ENCODE measurements at regions of chr1 and their contacts with region 1.

Region 1: DNA sequence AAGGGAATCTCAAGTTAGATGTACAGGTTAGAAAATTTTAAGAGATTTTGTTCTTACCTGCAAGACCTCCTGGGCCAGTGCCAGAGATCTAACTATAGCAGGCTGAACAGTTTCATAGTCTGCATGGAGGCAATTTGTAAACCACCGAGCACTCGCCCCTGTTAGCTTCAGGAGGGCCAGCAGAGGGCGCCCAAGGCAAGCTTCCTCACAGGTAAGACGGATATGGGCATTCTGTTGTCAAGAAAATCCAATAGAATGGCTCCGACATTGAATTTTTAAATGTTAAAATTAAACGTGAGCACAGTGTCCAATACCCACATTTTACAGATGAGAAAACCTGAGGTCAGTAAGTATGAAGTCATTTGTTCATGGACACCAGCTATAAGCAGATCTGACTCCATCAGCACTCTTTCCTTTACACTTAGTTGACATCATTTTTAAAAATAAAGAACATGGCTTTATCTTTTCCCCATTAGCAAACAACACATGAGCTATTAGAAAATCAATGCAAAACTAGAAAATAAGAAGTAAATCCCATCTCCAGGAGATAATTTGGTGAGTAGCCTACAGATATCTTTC is 2.2 kb downstream of the REG4 start:
- DNase-seq: peak; percentile 80
- ATAC-seq: peak; percentile 91
- H3K4me3 Mint-ChIP-seq: no peak overlapping the region
- H3K27ac Mint-ChIP-seq: no peak overlapping the region
- H3K4me1 Mint-ChIP-seq: peaks cover 4% of the 10 kb centered on the region
- H3K27me3 Mint-ChIP-seq: peaks cover 71% of the 10 kb centered on the region

Region 2: DNA sequence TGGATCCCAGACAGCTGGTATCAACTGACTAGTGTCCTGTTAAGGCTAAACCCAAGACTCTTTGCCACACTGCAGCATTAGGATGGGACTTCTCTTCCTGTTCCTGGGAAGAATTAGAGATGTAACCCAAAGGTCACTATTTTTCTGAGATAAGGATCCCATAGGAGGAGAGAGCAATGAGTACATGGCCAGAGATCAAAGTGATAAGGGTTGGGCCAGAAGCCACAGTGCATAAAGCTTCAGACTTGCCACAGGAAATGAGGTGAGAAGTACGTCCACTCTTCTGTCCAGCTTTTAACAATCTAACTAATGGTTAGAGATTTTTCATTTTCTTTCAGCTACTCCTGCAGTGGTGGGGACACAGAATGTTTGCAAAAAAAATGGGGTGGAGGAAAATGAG is 302.1 kb before region 1 on chr1 and contains the start of gene HSD3B1:
- CTCF ChIA-PET with region 1: no interaction called
- DNase-seq: no peak
- ATAC-seq: no peak
- H3K4me3 Mint-ChIP-seq: no peak within 1 kb of the TSS
- H3K27ac Mint-ChIP-seq: no peak within 1 kb of the TSS
- H3K4me1 Mint-ChIP-seq: no peaks in the 10 kb centered on the region
- H3K27me3 Mint-ChIP-seq: no peaks in the 10 kb centered on the region
- total RNA-seq, gene HSD3B1: not detected

Region 3: DNA sequence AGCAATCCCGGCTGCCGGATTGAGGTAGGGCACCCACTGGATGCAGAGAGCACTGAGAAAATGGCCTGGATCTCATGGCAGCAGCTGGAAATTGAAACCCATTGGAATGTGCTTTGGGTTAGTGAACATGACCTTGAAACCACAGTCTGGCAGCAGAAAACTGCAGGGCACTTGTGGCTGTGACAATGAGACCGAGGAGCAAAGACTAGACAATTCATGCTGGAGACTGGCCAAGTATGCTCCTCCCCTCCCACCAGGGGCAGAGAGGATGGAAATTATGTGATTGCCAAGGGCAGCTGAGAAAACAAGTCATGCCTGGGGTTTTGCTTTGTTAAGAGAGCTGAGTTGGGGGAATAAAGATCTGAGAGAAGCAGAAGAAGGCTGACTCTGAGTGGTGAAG is 221.7 kb before region 1 on chr1:
- CTCF ChIA-PET with region 1: no interaction called
- DNase-seq: no peak
- ATAC-seq: no peak
- H3K4me3 Mint-ChIP-seq: no peak overlapping the region
- H3K27ac Mint-ChIP-seq: no peak overlapping the region
- H3K4me1 Mint-ChIP-seq: no peaks in the 10 kb centered on the region
- H3K27me3 Mint-ChIP-seq: peaks cover 5% of the 10 kb centered on the region

Region 4: DNA sequence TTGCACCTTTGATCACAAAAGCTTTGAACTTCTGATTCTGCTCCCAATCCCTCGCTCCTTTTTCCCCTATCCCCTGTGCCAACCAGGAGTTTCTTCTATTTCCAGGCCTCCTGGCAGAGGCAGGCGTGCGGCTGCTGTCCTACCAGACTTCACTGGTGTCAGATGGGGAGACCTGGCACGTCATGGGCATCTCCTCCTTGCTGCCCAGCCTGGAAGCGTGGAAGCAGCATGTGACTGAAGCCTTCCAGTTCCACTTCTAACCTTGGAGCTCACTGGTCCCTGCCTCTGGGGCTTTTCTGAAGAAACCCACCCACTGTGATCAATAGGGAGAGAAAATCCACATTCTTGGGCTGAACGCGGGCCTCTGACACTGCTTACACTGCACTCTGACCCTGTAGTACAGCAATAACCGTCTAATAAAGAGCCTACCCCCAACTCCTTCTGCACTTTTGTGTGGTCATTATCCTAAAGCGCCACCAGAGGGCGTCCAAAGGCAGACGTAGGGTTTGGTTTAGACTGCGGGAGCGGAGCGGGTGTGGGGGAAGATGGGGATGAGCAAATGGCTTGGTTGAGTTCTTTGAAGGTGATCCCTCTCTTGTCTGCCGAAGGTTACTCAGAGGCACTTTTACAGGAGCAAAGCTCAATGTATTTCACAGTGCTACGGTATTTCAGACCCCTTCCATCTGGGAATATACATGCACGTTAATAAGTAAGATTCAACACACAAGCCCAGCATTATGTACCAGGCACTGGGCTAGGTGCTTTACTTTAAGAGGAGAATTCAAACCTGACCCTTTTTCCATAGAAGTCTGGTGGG is 65.1 kb before region 1 on chr1:
- CTCF ChIA-PET with region 1: interaction called, 23 read pairs
- DNase-seq: peak; percentile 64
- ATAC-seq: peak; percentile 60
- H3K4me3 Mint-ChIP-seq: no peak overlapping the region
- H3K27ac Mint-ChIP-seq: no peak overlapping the region
- H3K4me1 Mint-ChIP-seq: peaks cover 12% of the 10 kb centered on the region
- H3K27me3 Mint-ChIP-seq: peaks cover 3% of the 10 kb centered on the region

Region 5: DNA sequence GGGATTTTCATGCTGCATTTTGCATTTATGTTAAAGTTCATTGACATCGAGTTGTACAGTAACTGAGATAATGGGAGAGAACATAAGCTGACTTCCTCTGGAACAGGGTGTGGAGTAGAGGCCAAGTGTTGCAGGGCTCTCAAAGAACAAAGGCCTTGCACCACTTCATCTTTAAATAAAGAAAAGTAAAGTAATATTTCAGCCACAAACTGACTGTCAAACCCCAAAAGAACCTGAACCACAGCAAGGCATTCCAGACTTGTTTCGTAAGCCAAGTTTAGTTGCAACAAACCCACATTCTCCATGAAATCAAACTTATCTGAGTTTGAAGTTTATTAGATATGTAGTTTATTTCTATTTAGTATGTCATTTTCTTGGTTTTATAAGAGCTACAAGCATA is 21.3 kb before region 1 on chr1:
- CTCF ChIA-PET with region 1: interaction called, 12 read pairs
- DNase-seq: no peak
- ATAC-seq: no peak
- H3K4me3 Mint-ChIP-seq: no peak overlapping the region
- H3K27ac Mint-ChIP-seq: no peak overlapping the region
- H3K4me1 Mint-ChIP-seq: peaks cover 39% of the 10 kb centered on the region
- H3K27me3 Mint-ChIP-seq: peaks cover 57% of the 10 kb centered on the region

Region 6: GRCh38 chr1:119838236-119838635 is 29.2 kb after region 1 on chr1:
- CTCF ChIA-PET with region 1: no interaction called
- DNase-seq: no peak
- ATAC-seq: no peak
- H3K4me3 Mint-ChIP-seq: no peak overlapping the region
- H3K27ac Mint-ChIP-seq: no peak overlapping the region
- H3K4me1 Mint-ChIP-seq: no peaks in the 10 kb centered on the region
- H3K27me3 Mint-ChIP-seq: peaks cover 45% of the 10 kb centered on the region

Region 7: GRCh38 chr1:119870917-119871596 is 62.0 kb after region 1 on chr1:
- CTCF ChIA-PET with region 1: interaction called, 10 read pairs
- DNase-seq: peak; percentile 85
- ATAC-seq: peak; percentile 73
- H3K4me3 Mint-ChIP-seq: no peak overlapping the region
- H3K27ac Mint-ChIP-seq: no peak overlapping the region
- H3K4me1 Mint-ChIP-seq: peaks cover 17% of the 10 kb centered on the region
- H3K27me3 Mint-ChIP-seq: peaks cover 54% of the 10 kb centered on the region

Region 8: GRCh38 chr1:119920104-119920968 is 111.3 kb after region 1 on chr1:
- CTCF ChIA-PET with region 1: no interaction called
- DNase-seq: no peak
- ATAC-seq: no peak
- H3K4me3 Mint-ChIP-seq: no peak overlapping the region
- H3K27ac Mint-ChIP-seq: no peak overlapping the region
- H3K4me1 Mint-ChIP-seq: no peaks in the 10 kb centered on the region
- H3K27me3 Mint-ChIP-seq: no peaks in the 10 kb centered on the region

Region 9: DNA sequence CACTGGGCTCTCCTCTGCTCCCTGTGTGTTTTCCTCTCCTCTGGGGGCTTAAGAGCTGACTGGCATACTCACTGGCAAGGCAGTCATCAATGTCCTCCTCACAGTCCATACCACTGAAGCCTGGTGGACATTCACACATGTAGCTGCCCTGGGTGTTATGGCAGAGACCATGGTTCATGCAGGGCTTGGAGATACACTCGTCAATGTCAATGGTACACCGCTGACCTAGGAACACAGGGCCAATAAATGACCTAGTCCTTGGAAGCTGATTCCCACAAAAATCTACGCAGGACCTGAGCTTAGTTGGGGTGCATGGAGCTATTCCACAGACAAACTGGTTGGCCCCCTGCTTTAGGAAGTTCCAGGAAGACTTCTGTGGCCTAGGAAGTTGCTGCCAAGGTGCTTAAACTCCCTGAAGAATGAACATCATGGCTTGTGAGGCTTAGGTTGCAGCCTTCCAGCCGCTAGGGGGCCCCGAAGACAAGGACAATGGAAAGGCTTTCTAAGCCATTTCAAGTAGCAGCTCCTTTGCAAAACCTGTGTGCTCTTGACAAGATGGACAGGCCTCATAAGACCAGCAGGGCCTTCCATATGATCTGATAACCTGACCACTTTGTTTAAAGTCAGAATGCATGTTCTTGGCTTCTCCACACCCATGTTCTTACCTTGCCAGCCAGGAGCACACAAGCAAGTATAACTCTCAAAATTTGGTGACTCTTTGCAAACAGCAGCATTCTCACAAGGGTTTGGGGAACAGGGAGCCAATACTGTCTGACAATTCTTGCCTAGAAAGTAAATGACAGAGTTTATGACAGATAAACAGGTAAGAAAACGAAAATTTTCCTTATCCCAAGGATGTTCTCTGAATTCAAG is 139.5 kb after region 1 on chr1:
- CTCF ChIA-PET with region 1: interaction called, 11 read pairs
- DNase-seq: peak; percentile 84
- ATAC-seq: peak; percentile 83
- H3K4me3 Mint-ChIP-seq: no peak overlapping the region
- H3K27ac Mint-ChIP-seq: no peak overlapping the region
- H3K4me1 Mint-ChIP-seq: peaks cover 9% of the 10 kb centered on the region
- H3K27me3 Mint-ChIP-seq: no peaks in the 10 kb centered on the region

Measured in activated CD8-positive, alpha-beta memory T cell treated with anti-CD3 and anti-CD28 coated beads, Interleukin-2, amount 10 ng/mL, durations not matched to agents 7 days and 5 days (primary cell).